Mammary epithelial cell (primary cell): ENCODE measurements at regions of chr11 and their contacts with region 1.

Region 1: DNA sequence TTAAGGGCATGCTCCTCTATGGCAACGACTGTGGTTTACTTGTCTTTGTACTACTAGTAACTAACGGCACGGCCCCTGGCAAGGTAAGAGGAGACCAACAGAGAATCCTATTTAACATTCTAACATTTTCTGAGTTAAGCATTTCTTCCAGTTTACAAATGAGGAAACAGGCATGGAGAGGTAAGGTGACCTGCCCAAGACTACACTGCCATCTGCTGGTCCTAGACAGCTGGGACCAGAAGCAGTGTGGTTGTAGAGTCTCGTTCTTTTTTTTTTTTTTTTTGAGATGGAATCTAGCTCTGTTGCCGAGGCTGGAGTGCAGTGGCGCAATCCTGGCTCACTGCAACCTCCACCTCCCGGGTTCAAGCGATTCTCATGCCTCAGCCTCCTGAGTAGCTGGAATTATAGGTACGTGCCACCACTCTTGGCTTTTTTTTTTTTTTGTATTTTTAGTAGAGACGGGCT is 5.3 kb upstream of the RAPSN start:
- DNase-seq: peak; percentile 72
- H3K4me3 ChIP-seq: no peak overlapping the region
- H3K27ac ChIP-seq: no peak overlapping the region
- H3K4me1 ChIP-seq: no peaks in the 10 kb centered on the region
- H3K27me3 ChIP-seq: no peaks in the 10 kb centered on the region
- CTCF ChIP-seq: peak; percentile 90 to 92

Region 2: DNA sequence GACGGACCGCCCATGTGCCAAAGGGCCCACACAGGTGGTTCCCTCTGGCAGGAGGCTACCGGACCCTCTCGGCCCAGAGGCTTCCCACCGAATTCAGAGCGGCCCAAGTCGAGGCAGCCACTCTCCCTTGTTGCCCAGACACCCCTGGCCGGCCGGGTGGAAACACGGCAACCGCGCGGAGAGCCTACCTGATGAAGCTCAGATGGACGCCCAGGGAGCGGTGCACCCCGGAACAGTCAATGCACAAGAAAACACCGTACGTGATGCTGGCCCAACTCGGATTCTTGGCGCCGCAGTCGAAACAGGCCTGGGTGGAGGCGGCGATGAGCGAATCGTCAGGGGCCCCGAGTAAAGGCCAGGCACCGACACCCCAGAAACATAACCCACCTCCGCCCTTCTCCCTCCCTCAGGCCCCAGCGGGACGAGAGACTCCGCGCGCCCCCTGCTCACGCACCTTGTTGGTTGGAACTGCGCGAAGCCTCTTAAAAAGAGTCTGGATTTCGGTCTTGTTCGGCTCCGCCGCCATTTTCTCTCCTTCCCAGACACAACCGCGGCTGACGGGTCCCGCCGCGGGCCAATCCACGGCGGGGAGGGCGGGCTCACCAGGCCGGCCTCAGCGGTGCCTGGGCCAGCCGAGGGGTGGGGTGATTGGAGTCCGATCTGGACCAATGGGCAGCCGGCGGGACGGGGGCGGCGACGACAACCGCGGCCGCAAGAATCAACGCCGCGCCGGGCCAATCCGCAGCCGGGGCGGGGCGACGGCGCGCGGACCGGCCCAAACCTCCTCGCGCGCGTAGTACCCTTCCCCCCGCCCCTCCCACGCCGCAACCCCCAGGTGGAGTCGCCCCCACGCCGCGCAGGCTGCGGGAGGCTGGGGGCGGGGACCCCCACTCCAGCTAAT is 277.6 kb before region 1 on chr11 and contains the start of gene ARFGAP2:
- CTCF ChIA-PET with region 1: no interaction called
- dilution Hi-C with region 1: no loop called
- in situ Hi-C with region 1: no loop called
- intact Hi-C with region 1: loop called (anchors 10 kb)
- DNase-seq: peak; percentile 96
- H3K4me3 ChIP-seq: peak within 1 kb of the TSS; percentile 77 to 89 (median 87)
- H3K27ac ChIP-seq: peak within 1 kb of the TSS; percentile 84
- H3K4me1 ChIP-seq: peaks cover 18% of the 10 kb centered on the region
- H3K27me3 ChIP-seq: no peaks in the 10 kb centered on the region
- CTCF ChIP-seq: no peak
- total RNA-seq, gene ARFGAP2: 83.0 to 120 TPM

Region 3: DNA sequence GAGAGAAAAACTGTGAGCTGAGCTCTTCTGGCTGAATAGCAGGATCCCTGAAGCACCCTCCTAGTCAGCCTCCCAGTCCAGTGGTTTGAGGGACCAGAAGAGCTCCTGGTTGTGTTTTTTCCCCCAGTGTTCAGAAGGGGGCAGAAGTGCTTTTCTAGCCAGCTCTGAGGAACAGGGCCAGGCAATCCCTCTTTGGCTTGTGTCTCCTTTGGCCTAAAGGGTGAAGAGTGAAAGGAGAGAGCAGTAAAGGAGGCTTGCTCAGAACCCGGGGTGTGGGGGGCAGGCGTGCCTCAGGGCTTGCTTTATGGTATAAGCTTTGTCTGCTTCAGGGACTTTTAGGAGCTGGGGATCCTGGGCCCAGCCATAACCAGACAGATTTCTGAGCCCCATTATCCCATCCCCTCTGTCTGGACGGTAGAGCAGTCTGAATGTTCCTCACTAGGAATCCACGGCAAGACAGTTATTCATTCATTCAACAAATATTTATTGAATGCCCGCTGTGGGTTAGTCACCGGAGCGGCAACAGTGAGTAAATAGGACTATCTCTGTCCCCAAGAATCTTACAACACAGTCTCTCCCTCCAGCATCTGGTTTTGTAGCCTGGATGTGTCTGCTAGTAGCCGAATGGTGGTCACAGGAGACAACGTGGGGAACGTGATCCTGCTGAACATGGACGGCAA is 220.1 kb before region 1 on chr11:
- CTCF ChIA-PET with region 1: no interaction called
- dilution Hi-C with region 1: no loop called
- in situ Hi-C with region 1: no loop called
- intact Hi-C with region 1: no loop called
- DNase-seq: peak; percentile 52
- H3K4me3 ChIP-seq: no peak overlapping the region
- H3K27ac ChIP-seq: peak overlapping the region; percentile 2
- H3K4me1 ChIP-seq: peaks cover 19% of the 10 kb centered on the region
- H3K27me3 ChIP-seq: no peaks in the 10 kb centered on the region
- CTCF ChIP-seq: peak in 1 of 2 donors; percentile 34

Region 4: GRCh38 chr11:47259178-47259977 is 194.8 kb before region 1 on chr11:
- CTCF ChIA-PET with region 1: no interaction called
- dilution Hi-C with region 1: no loop called
- in situ Hi-C with region 1: no loop called
- intact Hi-C with region 1: loop called (anchors 5 kb)
- DNase-seq: no peak
- H3K4me3 ChIP-seq: no peak overlapping the region
- H3K27ac ChIP-seq: no peak overlapping the region
- H3K4me1 ChIP-seq: peaks cover 11% of the 10 kb centered on the region
- H3K27me3 ChIP-seq: no peaks in the 10 kb centered on the region
- CTCF ChIP-seq: peak; percentile 48 to 70

Region 5: GRCh38 chr11:47373876-47374720 is 80.1 kb before region 1 on chr11:
- CTCF ChIA-PET with region 1: no interaction called
- dilution Hi-C with region 1: no loop called
- in situ Hi-C with region 1: no loop called
- intact Hi-C with region 1: loop called (anchors 1 kb)
- DNase-seq: peak; percentile 35
- H3K4me3 ChIP-seq: no peak overlapping the region
- H3K27ac ChIP-seq: no peak overlapping the region
- H3K4me1 ChIP-seq: peaks cover 9% of the 10 kb centered on the region
- H3K27me3 ChIP-seq: no peaks in the 10 kb centered on the region
- CTCF ChIP-seq: peak; percentile 83 to 95

Region 6: GRCh38 chr11:47407746-47408590 is 46.2 kb before region 1 on chr11 and contains the start of gene SLC39A13:
- CTCF ChIA-PET with region 1: no interaction called
- dilution Hi-C with region 1: no loop called
- in situ Hi-C with region 1: no loop called
- intact Hi-C with region 1: loop called (anchors 1 kb)
- DNase-seq: peak; percentile 96
- H3K4me3 ChIP-seq: peak within 1 kb of the TSS; percentile 68 to 79 (median 70)
- H3K27ac ChIP-seq: peak within 1 kb of the TSS; percentile 88
- H3K4me1 ChIP-seq: peaks cover 30% of the 10 kb centered on the region
- H3K27me3 ChIP-seq: no peaks in the 10 kb centered on the region
- CTCF ChIP-seq: peak; percentile 61 to 72
- total RNA-seq, gene SLC39A13: 55.5 to 97.2 TPM

Region 7: GRCh38 chr11:47426061-47426956 is 27.9 kb before region 1 on chr11 and contains the start of gene PSMC3:
- CTCF ChIA-PET with region 1: no interaction called
- dilution Hi-C with region 1: no loop called
- in situ Hi-C with region 1: no loop called
- intact Hi-C with region 1: loop called (anchors 2 kb)
- DNase-seq: peak; percentile 95
- H3K4me3 ChIP-seq: peak within 1 kb of the TSS; percentile 88 to 99 (median 97)
- H3K27ac ChIP-seq: peak within 1 kb of the TSS; percentile 94
- H3K4me1 ChIP-seq: peaks cover 14% of the 10 kb centered on the region
- H3K27me3 ChIP-seq: no peaks in the 10 kb centered on the region
- CTCF ChIP-seq: no peak
- total RNA-seq, gene PSMC3: 72.7 to 142 TPM

Region 8: DNA sequence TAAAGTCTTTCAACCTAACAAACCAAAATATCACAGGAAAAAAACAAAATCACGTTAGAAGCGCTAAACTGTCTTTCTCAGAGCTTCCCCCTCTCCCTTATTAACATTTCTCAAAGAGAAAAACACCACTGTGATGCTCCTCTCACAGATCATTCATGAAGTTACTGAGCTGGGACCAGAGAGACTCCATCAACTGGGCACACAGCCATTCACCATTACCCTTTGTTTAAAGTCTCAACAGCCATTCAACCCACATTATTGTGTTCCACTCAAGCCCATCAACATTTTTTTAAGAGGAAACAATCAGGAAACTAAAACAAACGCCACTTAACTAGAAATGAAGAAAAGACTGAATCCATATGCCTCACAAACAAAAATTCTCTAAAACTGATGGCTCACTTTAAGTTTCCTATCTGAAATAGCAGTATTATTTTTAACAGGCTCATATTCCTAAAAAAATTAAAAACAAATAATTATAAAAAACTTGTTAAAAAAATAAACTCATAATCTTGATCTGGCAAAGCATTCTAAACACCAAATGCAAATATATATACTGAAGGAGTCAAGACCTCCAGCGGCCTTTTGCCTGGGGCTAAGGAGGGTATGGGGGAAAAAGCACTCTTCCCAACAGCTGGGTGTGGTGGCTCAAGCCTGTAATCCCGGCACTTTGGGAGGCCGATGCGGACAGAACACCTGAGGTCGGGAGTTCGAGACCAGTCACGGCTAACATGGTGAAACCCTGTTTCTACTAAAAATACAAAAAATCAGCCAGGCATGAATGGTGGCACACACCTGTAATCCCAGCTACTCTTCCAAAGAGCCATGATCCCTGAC is 84.7 kb after region 1 on chr11:
- CTCF ChIA-PET with region 1: no interaction called
- dilution Hi-C with region 1: loop called (anchors 5 kb)
- in situ Hi-C with region 1: no loop called
- intact Hi-C with region 1: no loop called
- DNase-seq: no peak
- H3K4me3 ChIP-seq: no peak overlapping the region
- H3K27ac ChIP-seq: peak overlapping the region; percentile 76
- H3K4me1 ChIP-seq: peaks cover 28% of the 10 kb centered on the region
- H3K27me3 ChIP-seq: no peaks in the 10 kb centered on the region
- CTCF ChIP-seq: no peak